ENCODE measurements at regions of chr1 and their contacts with region 1.

Region 1: GRCh38 chr1:116817582-116818064 is 63.4 kb downstream of the CD2 start:
- DNase-seq: peak; percentile 91
- H3K4me3 Mint-ChIP-seq: no peak overlapping the region
- H3K27ac Mint-ChIP-seq: peak overlapping the region; percentile 98
- H3K4me1 Mint-ChIP-seq: peaks cover 66% of the 10 kb centered on the region
- H3K27me3 Mint-ChIP-seq: no peaks in the 10 kb centered on the region

Region 2: DNA sequence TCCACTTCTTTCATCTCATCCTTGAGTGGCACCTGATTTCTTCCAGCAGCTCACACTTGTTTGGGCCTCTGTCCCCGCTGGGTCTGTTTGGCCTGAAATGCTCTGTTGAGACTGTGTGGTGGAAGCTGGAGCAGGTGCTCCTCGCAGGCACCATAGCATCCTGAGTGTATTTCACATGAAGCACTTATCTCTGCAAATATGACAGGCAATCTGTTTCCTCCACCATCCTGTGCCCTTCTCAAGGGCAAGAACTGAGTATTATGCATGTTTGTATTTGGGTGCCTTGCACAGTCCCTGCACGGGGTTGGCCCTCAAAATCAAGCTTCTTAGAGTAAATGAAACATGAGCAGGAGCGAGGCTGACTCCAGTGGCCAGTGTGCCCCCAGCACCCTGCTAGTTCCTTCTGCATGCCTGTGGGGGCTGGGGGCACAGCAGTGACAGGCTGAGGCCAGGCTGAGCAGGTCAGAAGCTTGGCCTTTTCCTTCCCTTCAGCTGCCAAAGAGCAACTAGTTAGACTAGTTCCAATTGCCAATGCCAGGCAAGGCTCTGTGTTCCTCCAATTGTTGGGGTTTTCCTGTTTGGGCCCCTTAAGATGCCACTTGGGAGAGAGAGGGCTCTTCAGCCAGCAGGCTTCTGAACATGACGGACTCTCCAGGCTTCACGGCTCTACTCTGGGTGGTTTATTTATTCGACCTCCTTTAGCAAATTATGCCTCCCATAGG is 574.1 kb before region 1 on chr1:
- CTCF ChIA-PET with region 1: no interaction called
- intact Hi-C with region 1: no loop called
- DNase-seq: no peak
- H3K4me3 Mint-ChIP-seq: no peak overlapping the region
- H3K27ac Mint-ChIP-seq: no peak overlapping the region
- H3K4me1 Mint-ChIP-seq: peaks cover 12% of the 10 kb centered on the region
- H3K27me3 Mint-ChIP-seq: no peaks in the 10 kb centered on the region

Region 3: DNA sequence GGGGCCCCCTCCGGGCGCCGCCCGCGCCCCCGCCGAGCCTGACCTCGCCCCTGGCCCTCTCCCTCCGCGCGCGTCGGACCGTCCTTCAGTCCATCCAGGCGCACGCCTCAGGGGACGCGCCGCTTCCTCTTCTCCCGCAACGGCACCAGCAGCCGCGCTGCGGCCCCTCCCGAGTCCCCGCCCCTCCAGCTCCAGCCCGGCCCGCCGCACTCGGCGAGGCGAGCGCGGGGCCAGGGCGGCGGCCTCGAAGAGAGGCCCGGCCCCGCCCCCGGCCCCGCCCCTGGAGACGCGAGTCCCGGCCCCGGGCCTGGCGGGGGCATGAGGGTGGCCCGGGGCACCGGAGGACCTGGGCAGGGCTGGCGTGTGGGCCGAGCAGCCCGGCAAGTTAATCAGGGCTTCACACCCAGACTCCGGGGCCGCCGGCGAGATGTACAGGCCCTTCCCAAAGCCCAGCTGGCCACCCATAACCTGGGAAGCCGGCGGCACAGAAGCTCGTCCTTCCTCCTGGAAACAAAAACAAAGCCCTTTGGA is 150.0 kb before region 1 on chr1 and contains the start of gene IGSF3:
- CTCF ChIA-PET with region 1: no interaction called
- intact Hi-C with region 1: loop called (anchors 5 kb)
- DNase-seq: peak; percentile 53
- H3K4me3 Mint-ChIP-seq: peak within 1 kb of the TSS; percentile 61
- H3K27ac Mint-ChIP-seq: no peak within 1 kb of the TSS
- H3K4me1 Mint-ChIP-seq: peaks cover 3% of the 10 kb centered on the region
- H3K27me3 Mint-ChIP-seq: peaks cover 45% of the 10 kb centered on the region
- total RNA-seq, gene IGSF3: 0.81 to 0.96 TPM

Region 4: DNA sequence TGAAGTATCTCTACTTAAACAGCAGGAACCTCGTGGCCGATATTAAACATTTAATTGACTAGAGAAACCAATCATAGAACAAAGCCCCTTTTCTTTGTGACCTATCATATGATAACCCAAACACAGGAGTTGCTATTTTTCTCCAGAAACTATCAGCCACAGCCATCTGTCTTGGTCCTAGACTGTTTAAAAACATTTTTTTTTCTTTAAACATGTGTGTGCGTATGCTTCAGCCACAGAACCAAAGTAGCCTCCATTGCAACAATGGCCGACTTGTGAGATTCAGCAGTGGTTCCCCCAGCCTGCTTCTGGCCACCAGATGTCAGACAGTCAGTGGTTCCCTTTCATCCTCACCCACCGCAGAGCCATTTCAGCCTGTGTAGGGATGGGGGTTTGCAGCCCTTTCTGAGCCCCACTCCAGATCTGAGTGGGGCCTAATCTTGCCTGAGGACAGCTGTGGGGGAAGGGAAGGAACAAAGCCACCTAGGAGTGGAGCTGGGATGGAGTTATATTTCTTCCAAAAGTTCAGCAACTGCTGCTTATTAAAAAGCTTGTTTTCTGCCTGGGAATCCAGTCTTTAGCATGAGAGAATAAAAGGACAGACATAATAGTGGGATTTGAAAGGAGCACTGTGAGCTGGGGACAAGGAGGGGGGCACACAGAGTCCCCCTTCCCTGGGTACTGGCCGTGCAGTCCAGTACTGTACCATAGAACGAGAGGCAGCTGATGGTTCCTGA is 138.4 kb before region 1 on chr1:
- CTCF ChIA-PET with region 1: no interaction called
- intact Hi-C with region 1: no loop called
- DNase-seq: no peak
- H3K4me3 Mint-ChIP-seq: no peak overlapping the region
- H3K27ac Mint-ChIP-seq: no peak overlapping the region
- H3K4me1 Mint-ChIP-seq: no peaks in the 10 kb centered on the region
- H3K27me3 Mint-ChIP-seq: no peaks in the 10 kb centered on the region

Region 5: DNA sequence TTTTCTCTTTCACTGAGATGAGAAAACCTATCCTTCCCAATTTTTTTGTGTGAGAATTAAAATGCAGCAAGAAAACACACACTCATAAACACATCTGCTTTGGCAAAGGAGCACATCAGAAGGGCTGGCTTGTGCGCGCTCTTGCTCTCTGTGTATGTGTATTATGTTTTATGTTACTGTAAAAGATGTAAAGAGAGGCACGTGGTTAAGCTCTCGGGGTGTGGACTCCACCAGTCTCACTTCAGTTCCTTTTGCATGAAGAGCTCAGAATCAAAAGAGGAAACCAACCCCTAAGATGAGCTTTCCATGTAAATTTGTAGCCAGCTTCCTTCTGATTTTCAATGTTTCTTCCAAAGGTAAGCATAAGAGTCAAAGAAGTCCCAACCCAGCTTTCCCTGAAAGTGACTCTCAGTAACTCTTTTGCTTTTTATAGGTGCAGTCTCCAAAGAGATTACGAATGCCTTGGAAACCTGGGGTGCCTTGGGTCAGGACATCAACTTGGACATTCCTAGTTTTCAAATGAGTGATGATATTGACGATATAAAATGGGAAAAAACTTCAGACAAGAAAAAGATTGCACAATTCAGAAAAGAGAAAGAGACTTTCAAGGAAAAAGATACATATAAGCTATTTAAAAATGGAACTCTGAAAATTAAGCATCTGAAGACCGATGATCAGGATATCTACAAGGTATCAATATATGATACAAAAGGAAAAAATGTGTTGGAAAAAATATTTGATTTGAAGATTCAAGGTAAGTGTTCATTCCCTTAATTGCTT is 63.2 kb before region 1 on chr1 and contains the start of gene CD2:
- CTCF ChIA-PET with region 1: interaction called, 5 read pairs
- intact Hi-C with region 1: loop called (anchors 1 kb)
- DNase-seq: peak; percentile 81
- H3K4me3 Mint-ChIP-seq: peak within 1 kb of the TSS; percentile 100
- H3K27ac Mint-ChIP-seq: peak within 1 kb of the TSS; percentile 100
- H3K4me1 Mint-ChIP-seq: peaks cover 28% of the 10 kb centered on the region
- H3K27me3 Mint-ChIP-seq: no peaks in the 10 kb centered on the region
- total RNA-seq, gene CD2: 251 to 264 TPM

Region 6: GRCh38 chr1:116763787-116764465 is 53.7 kb before region 1 on chr1:
- CTCF ChIA-PET with region 1: interaction called, 72 read pairs
- intact Hi-C with region 1: loop called (anchors 1 kb)
- DNase-seq: peak; percentile 68
- H3K4me3 Mint-ChIP-seq: peak overlapping the region; percentile 100
- H3K27ac Mint-ChIP-seq: peak overlapping the region; percentile 100
- H3K4me1 Mint-ChIP-seq: peaks cover 87% of the 10 kb centered on the region
- H3K27me3 Mint-ChIP-seq: no peaks in the 10 kb centered on the region

Region 7: GRCh38 chr1:116971258-116971860 is 153.7 kb after region 1 on chr1:
- CTCF ChIA-PET with region 1: no interaction called
- intact Hi-C with region 1: no loop called
- DNase-seq: no peak
- H3K4me3 Mint-ChIP-seq: no peak overlapping the region
- H3K27ac Mint-ChIP-seq: no peak overlapping the region
- H3K4me1 Mint-ChIP-seq: no peaks in the 10 kb centered on the region
- H3K27me3 Mint-ChIP-seq: no peaks in the 10 kb centered on the region